ENCODE measurements at regions of chr15 and their contacts with region 1.

Region 1: GRCh38 chr15:27293607-27294006 is 322.6 kb downstream of the GABRG3 start:
- DNase-seq: no peak
- ATAC-seq: no peak
- H3K4me3 ChIP-seq: no peak overlapping the region
- H3K27ac ChIP-seq: no peak overlapping the region
- H3K4me1 ChIP-seq: no peaks in the 10 kb centered on the region
- H3K27me3 ChIP-seq: no peaks in the 10 kb centered on the region
- CTCF ChIP-seq: no peak

Region 2: DNA sequence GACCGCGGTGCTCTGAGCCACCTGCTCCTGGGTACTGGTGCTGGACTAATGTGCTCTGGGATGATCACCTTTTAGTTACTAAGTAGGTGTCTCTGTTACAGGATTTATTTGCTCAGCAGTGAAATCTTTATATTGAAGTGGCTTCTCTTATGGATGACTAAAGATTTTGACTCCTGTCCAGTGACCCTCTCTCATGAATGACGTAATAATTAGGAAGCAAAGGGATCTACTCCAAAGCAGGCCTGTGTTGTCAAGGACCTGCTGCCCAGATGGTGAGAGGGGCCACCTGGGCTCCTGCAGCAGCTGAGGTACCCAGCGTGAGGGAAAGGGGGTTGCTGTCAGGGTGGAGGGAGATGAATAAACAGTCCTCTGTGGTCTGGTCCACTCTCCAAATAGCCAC is 59.0 kb before region 1 on chr15:
- CTCF ChIA-PET with region 1: no interaction called
- POLR2A ChIA-PET with region 1: no interaction called
- in situ Hi-C with region 1: no loop called
- intact Hi-C with region 1: no loop called
- DNase-seq: no peak
- ATAC-seq: no peak
- H3K4me3 ChIP-seq: no peak overlapping the region
- H3K27ac ChIP-seq: no peak overlapping the region
- H3K4me1 ChIP-seq: no peaks in the 10 kb centered on the region
- H3K27me3 ChIP-seq: no peaks in the 10 kb centered on the region
- CTCF ChIP-seq: no peak

Region 3: DNA sequence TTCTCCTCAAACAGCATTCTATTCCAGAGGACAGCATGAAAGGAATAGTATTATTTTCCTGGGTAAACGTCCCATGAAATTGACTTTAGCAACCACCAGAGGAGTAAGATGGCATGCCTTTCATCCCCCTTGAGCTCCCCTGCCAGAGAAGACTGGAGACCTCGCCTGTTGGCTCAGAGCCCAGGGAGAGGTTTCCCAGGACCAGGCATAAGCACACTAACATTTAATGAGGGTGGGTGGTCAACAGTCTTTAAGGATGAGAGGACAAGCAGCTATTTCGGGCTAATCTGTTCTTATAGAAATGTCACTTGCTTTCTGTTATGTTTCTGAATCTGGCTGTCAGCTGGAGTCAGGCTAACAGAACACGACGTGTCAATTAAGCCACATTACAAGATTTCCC is 67.8 kb after region 1 on chr15:
- CTCF ChIA-PET with region 1: no interaction called
- POLR2A ChIA-PET with region 1: no interaction called
- in situ Hi-C with region 1: no loop called
- intact Hi-C with region 1: loop called (anchors 2 kb)
- DNase-seq: no peak
- ATAC-seq: no peak
- H3K4me3 ChIP-seq: no peak overlapping the region
- H3K27ac ChIP-seq: no peak overlapping the region
- H3K4me1 ChIP-seq: no peaks in the 10 kb centered on the region
- H3K27me3 ChIP-seq: no peaks in the 10 kb centered on the region
- CTCF ChIP-seq: no peak

Region 4: DNA sequence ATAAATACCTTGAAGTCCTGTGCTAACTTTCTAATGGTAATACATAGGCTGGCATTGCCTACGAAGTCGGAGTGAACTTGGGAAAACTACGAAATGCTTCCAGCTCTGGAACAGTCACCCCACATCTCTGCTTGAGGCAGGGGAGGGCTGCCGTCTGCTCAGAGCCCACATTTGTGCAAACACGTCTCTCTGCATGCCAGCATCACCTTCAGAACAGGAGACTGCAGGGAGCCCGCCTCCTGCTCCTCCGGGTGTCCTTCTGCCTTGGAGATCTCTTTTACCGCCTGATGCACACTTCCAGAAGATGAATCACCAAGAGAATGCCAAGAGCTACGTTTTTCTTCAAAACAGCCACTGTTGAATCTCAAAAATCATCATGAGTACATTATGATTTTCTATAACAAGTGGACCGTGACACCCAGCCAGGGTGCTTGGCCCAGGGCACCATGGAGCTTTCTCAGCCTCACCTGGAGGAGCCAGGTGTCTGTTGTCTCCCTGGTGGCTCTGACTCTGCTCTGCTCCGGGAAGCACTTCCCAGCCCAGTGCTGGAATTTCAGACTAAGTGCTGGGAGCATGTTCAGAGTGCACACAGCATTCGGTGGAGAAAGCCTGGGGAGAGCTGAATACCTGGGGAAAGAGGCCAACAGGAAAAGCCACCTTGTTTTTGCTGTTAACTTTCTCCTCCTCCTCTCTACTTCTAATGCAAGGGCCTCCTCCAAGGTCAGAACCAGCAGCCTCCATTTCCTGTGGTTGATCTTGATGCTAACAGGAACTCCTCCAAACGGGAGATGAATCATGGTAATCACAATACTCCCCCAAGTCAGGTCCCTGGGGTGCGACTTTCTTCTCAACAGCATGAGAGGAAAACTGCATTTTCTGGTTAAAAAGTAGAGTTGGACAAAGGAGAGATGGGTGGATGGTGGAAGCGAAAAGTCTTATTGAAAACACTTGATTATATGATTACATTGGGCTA is 145.1 kb after region 1 on chr15:
- CTCF ChIA-PET with region 1: no interaction called
- POLR2A ChIA-PET with region 1: no interaction called
- in situ Hi-C with region 1: no loop called
- intact Hi-C with region 1: no loop called
- DNase-seq: no peak
- ATAC-seq: no peak
- H3K4me3 ChIP-seq: no peak overlapping the region
- H3K27ac ChIP-seq: no peak overlapping the region
- H3K4me1 ChIP-seq: no peaks in the 10 kb centered on the region
- H3K27me3 ChIP-seq: no peaks in the 10 kb centered on the region
- CTCF ChIP-seq: no peak